ENCODE measurements at regions of chr3 and their contacts with region 1.

Region 1: DNA sequence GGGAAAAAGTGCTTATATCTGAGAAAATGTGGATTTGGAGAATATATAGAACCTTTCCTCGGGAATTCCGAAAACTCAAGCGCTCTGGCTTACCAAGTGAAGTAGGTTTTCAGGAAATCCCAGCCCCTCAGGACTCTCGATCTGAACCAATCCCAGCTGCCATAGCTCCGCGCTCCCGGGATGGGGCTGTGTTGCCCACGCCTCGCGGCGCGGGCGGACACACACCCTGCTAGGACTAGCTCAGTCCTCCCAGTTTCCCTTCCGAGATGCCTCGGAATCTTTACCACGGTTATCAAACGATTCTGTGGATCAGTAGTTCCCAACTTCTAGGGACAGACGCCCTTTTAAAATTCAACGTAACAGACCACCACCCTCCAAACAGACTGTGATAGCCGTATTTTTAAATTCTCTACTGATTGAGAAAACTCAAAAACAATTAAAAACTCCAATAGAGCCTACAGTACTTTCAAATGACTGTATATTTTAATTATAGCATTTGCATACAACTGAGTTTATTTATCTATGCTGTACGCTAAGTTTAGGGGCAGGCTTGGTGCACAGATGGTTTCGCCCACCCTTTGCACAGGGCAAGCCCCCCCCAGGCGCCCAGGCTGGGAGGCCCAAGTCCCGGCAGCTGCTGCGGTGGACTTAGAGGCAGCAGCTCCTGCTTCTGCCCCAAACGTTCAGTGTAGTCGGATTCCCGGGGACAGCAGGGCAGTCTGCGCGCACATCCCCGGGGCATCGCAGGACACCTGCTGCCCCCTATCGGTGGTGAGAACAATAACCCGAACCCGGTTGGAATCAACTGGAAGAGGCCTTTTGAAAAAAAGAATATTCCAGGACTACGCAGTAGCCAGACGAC is 52.3 kb downstream of the CCDC54 start:
- DNase-seq: peak; percentile 81 to 84 (median 83)
- H3K4me3 ChIP-seq: peak overlapping the region; percentile 77
- H3K27ac ChIP-seq: peak overlapping the region; percentile 84 to 99
- H3K4me1 ChIP-seq: no peaks in the 10 kb centered on the region
- H3K27me3 ChIP-seq: no peaks in the 10 kb centered on the region
- CTCF ChIP-seq: peak; percentile 80 to 88 (median 86)
- EP300 ChIP-seq: no peak
- POLR2A ChIP-seq: peak; percentile 37

Region 2: GRCh38 chr3:106578911-106579310 is 850.6 kb before region 1 on chr3:
- intact Hi-C with region 1: no loop called
- DNase-seq: no peak
- H3K4me3 ChIP-seq: no peak overlapping the region
- H3K27ac ChIP-seq: no peak overlapping the region
- H3K4me1 ChIP-seq: no peaks in the 10 kb centered on the region
- H3K27me3 ChIP-seq: no peaks in the 10 kb centered on the region
- CTCF ChIP-seq: no peak
- EP300 ChIP-seq: no peak
- POLR2A ChIP-seq: no peak

Region 3: GRCh38 chr3:107142171-107142570 is 287.4 kb before region 1 on chr3:
- intact Hi-C with region 1: no loop called
- DNase-seq: no peak
- H3K4me3 ChIP-seq: no peak overlapping the region
- H3K27ac ChIP-seq: no peak overlapping the region
- H3K4me1 ChIP-seq: no peaks in the 10 kb centered on the region
- H3K27me3 ChIP-seq: no peaks in the 10 kb centered on the region
- CTCF ChIP-seq: no peak
- EP300 ChIP-seq: no peak
- POLR2A ChIP-seq: no peak

Region 4: GRCh38 chr3:107198581-107199181 is 230.9 kb before region 1 on chr3:
- intact Hi-C with region 1: no loop called
- DNase-seq: no peak
- H3K4me3 ChIP-seq: no peak overlapping the region
- H3K27ac ChIP-seq: peak overlapping the region in 1 of 2 donors; percentile 41
- H3K4me1 ChIP-seq: peaks cover 7% of the 10 kb centered on the region
- H3K27me3 ChIP-seq: no peaks in the 10 kb centered on the region
- CTCF ChIP-seq: no peak
- EP300 ChIP-seq: no peak
- POLR2A ChIP-seq: no peak

Region 5: DNA sequence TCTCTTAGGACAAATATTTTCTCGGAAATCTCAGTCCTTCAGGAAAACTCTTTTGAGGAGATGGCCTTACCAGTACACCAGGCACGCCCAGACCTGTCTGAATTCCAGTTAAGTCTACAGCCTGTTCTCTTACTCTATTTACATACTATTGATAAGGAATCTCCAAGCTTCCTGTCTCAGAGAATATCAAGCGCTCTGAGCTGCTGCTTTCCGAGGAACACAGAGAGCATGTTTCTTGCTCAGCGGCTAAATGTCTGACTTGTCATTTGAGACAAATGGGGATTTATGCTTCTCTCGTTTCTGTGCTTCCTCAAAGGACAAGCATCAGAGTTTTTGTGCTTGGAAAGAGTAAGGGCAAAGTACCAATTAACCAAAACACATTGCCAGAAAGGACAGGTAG is 164.7 kb before region 1 on chr3:
- intact Hi-C with region 1: loop called in 1 of 4 experiments (anchors 10 kb)
- DNase-seq: no peak
- H3K4me3 ChIP-seq: no peak overlapping the region
- H3K27ac ChIP-seq: peak overlapping the region in 1 of 2 donors; percentile 36
- H3K4me1 ChIP-seq: peaks cover 2% of the 10 kb centered on the region
- H3K27me3 ChIP-seq: no peaks in the 10 kb centered on the region
- CTCF ChIP-seq: no peak
- EP300 ChIP-seq: no peak
- POLR2A ChIP-seq: no peak

Region 6: GRCh38 chr3:107704477-107704876 is 274.9 kb after region 1 on chr3:
- intact Hi-C with region 1: no loop called
- DNase-seq: no peak
- H3K4me3 ChIP-seq: no peak overlapping the region
- H3K27ac ChIP-seq: no peak overlapping the region
- H3K4me1 ChIP-seq: no peaks in the 10 kb centered on the region
- H3K27me3 ChIP-seq: no peaks in the 10 kb centered on the region
- CTCF ChIP-seq: no peak
- EP300 ChIP-seq: no peak
- POLR2A ChIP-seq: no peak

Measured in ovary (tissue), 10 donors.